ENCODE measurements at regions of chr6 and their contacts with region 1.

Region 1: DNA sequence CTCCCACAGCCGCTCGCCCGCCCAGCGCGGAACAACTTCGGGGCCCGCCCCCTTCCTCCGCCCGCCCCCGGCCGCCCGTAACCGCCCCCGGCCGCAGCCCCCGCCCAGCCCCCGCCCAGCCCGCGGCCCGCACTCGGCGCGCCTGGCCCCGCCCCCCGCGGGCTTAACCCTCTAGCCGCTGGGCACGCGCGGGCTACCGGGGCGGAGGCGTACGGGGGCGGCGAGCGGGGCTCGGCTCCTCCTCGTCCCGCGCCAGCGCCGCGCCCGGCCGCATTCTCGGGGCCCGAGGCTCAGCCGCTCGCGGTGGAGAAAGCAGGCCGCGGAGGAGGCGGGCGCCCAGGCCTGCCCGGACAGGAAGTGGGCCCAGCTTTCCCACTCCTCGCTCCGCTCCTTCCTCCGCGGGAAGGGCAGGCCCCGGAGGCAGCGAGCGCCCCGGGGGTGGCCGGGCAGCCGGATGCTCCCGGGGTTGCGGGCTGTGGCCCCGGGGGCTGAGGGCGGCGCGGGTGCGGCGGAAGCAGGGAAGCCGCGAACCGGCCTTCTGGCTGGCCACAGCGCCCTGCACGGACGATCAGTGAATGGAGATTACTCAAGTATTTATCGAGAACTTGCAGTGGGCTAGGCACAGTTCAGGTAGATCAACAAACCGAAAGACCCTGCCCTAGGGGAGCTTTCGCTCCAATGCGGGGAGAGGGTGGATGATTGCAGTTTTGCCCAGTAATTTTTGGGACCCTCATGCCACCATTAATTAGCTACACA is at the start of gene TRAM2:
- DNase-seq: peak; percentile 91
- H3K4me3 ChIP-seq: peak within 1 kb of the TSS; percentile 88
- H3K27ac ChIP-seq: peak within 1 kb of the TSS; percentile 99
- H3K4me1 ChIP-seq: peaks cover 60% of the 10 kb centered on the region
- H3K27me3 ChIP-seq: no peaks in the 10 kb centered on the region
- CTCF ChIP-seq: peak; percentile 39
- total RNA-seq, gene TRAM2: 11.0 TPM

Region 2: GRCh38 chr6:52517502-52518278 is 59.5 kb before region 1 on chr6:
- intact Hi-C with region 1: loop called (anchors 10 kb)
- DNase-seq: peak; percentile 86
- H3K4me3 ChIP-seq: peak overlapping the region; percentile 26
- H3K27ac ChIP-seq: peak overlapping the region; percentile 92
- H3K4me1 ChIP-seq: peaks cover 90% of the 10 kb centered on the region
- H3K27me3 ChIP-seq: no peaks in the 10 kb centered on the region
- CTCF ChIP-seq: no peak